ENCODE measurements at regions of chr14 and their contacts with region 1.

Region 1: GRCh38 chr14:69574263-69574953 is at the start of gene CCDC177:
- DNase-seq: peak; percentile 36 to 44 (median 42)
- H3K4me3 ChIP-seq: no peak within 1 kb of the TSS
- H3K4me3 Mint-ChIP-seq: peak within 1 kb of the TSS; percentile 37 to 86
- H3K27ac ChIP-seq: no peak within 1 kb of the TSS
- H3K27ac Mint-ChIP-seq: peak within 1 kb of the TSS in 3 of 7 donors; percentile 17 to 73 (median 52)
- H3K4me1 ChIP-seq: peaks cover 3 to 13% of the 10 kb centered on the region in 2 donors
- H3K4me1 Mint-ChIP-seq: peaks cover 13% of the 10 kb centered on the region
- H3K27me3 ChIP-seq: peaks cover 21 to 75% of the 10 kb centered on the region in 2 donors
- H3K27me3 Mint-ChIP-seq: peaks cover 72 to 92% (median 81%) of the 10 kb centered on the region in 3 donors
- CTCF ChIP-seq: peak; percentile 92
- polyA plus RNA-seq, gene CCDC177: not detected

Region 2: GRCh38 chr14:69242311-69243224 is 331.8 kb before region 1 on chr14:
- intact Hi-C with region 1: loop called in 1 of 2 experiments (anchors 10 kb)
- DNase-seq: peak; percentile 26 to 51 (median 47)
- H3K4me3 ChIP-seq: no peak overlapping the region
- H3K4me3 Mint-ChIP-seq: no peak overlapping the region
- H3K27ac ChIP-seq: no peak overlapping the region
- H3K27ac Mint-ChIP-seq: peak overlapping the region in 1 of 7 donors; percentile 64
- H3K4me1 ChIP-seq: no peaks in the 10 kb centered on the region
- H3K4me1 Mint-ChIP-seq: no peaks in the 10 kb centered on the region
- H3K27me3 ChIP-seq: no peaks in the 10 kb centered on the region
- H3K27me3 Mint-ChIP-seq: peaks cover 0 to 1% (median 0%) of the 10 kb centered on the region in 3 donors
- CTCF ChIP-seq: peak; percentile 82

Region 3: DNA sequence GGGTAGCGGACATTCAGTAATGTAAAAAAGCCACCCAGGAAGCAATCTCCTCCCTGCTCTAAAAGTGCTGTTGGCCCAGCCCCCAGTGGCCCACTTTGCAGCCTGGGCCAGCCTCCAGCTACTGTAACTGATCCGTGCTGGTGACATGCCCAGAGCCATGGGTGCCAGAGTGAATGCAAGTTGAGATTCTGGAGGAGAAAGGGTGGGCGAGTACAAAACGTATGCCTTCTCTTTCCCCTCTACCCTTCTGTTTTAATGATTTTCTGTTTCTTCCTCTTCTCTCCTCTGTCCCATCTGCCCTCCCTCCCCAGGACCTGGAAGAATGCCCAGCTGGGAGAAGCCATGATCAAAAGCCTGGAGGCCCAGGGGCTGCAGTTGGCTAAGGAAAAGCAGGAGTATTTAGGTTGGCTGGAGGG is 73.0 kb before region 1 on chr14:
- intact Hi-C with region 1: no loop called
- DNase-seq: no peak
- H3K4me3 ChIP-seq: no peak overlapping the region
- H3K4me3 Mint-ChIP-seq: no peak overlapping the region
- H3K27ac ChIP-seq: no peak overlapping the region
- H3K27ac Mint-ChIP-seq: peak overlapping the region in 1 of 7 donors; percentile 65
- H3K4me1 ChIP-seq: no peaks in the 10 kb centered on the region
- H3K4me1 Mint-ChIP-seq: no peaks in the 10 kb centered on the region
- H3K27me3 ChIP-seq: no peaks in the 10 kb centered on the region
- H3K27me3 Mint-ChIP-seq: peaks cover 5 to 11% (median 5%) of the 10 kb centered on the region in 3 donors
- CTCF ChIP-seq: no peak

Region 4: DNA sequence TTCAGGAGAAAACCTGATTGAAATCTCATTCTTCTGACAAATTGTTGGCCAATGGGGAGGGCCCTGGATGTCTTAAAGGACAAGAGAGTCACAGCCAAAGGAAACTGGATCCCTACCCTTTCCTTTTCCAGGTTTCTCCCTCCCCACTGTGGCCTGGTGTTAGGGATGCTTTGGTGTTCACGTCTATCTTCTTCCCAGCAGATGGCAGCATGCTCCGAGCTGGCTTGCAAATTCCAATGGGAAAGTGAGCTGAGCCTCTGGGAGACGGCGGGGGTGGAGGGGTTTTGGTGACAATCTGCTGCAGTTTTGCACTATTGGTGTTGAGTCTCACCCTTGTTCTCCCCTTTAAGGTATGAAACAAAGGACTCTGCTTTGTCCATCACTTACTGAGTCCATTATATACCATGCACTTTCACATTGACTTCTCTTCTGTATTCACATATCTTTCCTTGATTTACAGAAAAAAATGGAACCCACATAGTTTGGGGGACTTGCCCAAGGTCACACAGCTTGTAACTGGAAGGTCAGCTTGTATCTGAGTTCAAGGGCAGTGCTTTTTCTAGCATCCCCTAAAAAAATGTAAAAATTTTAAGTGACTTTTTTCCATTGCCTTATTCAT is 39.1 kb before region 1 on chr14:
- intact Hi-C with region 1: loop called (anchors 5 kb)
- DNase-seq: peak in 1 of 3 donors; percentile 22
- H3K4me3 ChIP-seq: no peak overlapping the region
- H3K4me3 Mint-ChIP-seq: no peak overlapping the region
- H3K27ac ChIP-seq: no peak overlapping the region
- H3K27ac Mint-ChIP-seq: no peak overlapping the region
- H3K4me1 ChIP-seq: peaks cover 15 to 16% of the 10 kb centered on the region in 2 donors
- H3K4me1 Mint-ChIP-seq: peaks cover 28% of the 10 kb centered on the region
- H3K27me3 ChIP-seq: no peaks in the 10 kb centered on the region
- H3K27me3 Mint-ChIP-seq: peaks cover 12 to 22% (median 12%) of the 10 kb centered on the region in 3 donors
- CTCF ChIP-seq: peak; percentile 34

Region 5: DNA sequence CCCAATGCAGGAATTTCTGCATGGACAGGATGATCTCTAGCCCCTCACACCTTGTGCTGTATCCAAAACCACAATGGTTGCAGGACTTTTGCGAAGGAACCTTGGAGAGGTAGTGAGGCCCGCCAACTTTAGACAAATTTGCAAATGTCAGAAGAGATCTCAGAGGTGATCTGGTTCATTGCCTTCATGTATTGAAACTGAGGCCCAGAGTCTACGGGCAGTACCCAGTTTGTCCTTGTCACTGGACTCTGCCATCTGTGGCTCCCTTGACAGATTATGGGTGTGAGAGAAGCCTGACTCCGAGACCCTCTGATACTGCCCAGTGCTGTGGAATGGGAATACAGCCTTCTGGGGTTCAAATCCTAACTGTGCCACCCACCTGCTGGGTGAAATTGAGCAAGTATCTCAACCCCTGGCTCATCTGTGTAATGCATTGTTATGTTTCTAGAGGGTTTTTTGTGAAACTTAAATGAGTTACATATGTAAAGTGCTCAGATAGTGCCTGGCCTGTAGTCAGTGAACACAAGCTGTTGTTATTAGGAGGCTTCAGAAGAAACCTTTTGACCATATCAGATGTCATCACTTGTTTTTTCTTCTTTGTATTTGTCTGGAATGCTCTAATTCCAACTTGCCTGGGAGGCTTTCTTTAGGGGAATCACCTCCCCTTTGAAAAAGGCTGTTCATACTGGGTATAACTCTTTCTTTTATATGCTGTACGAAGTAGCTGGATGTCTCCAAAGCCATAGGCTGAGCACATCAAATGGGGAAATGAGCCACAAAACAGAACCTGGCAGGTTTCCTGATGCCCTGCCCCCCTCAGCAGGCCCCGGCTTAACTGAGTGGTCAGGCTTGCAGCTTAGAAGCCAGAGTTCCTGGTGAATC is 121.2 kb after region 1 on chr14:
- intact Hi-C with region 1: no loop called
- DNase-seq: peak in 1 of 3 donors; percentile 40
- H3K4me3 ChIP-seq: peak overlapping the region in 1 of 3 experiments; percentile 41
- H3K4me3 Mint-ChIP-seq: peak overlapping the region in 1 of 2 donors; percentile 62
- H3K27ac ChIP-seq: peak overlapping the region; percentile 81 to 85
- H3K27ac Mint-ChIP-seq: peak overlapping the region; percentile 25 to 95 (median 92)
- H3K4me1 ChIP-seq: peaks cover 82% of the 10 kb centered on the region in 2 donors
- H3K4me1 Mint-ChIP-seq: peaks cover 94% of the 10 kb centered on the region
- H3K27me3 ChIP-seq: no peaks in the 10 kb centered on the region
- H3K27me3 Mint-ChIP-seq: peaks cover 0 to 1% (median 0%) of the 10 kb centered on the region in 3 donors
- CTCF ChIP-seq: no peak

Measured in CD14-positive monocyte (primary cell).